H1 (cell line): ENCODE measurements at regions of chr17 and their contacts with region 1.

Region 1: GRCh38 chr17:75979705-75980187 is 706 bp downstream of the TEN1 start:
- DNase-seq: no peak
- H3K4me3 ChIP-seq: peak overlapping the region; percentile 72 to 88 (median 86)
- H3K27ac ChIP-seq: peak overlapping the region; percentile 93
- H3K4me1 ChIP-seq: peaks cover 6 to 15% (median 13%) of the 10 kb centered on the region in 4 experiments
- H3K27me3 ChIP-seq: no peaks in the 10 kb centered on the region
- CTCF ChIP-seq: no peak
- EP300 ChIP-seq: no peak
- POLR2A ChIP-seq: no peak; a peak in 1 of 3 replicates
- RAD21 ChIP-seq: no peak

Region 2: GRCh38 chr17:76005263-76006149 is 25.8 kb after region 1 on chr17:
- CTCF ChIA-PET with region 1: interaction called, 19 read pairs
- POLR2A ChIA-PET with region 1: interaction called, 6 read pairs
- DNase-seq: peak in 1 of 2 experiments; percentile 99
- H3K4me3 ChIP-seq: no peak overlapping the region
- H3K27ac ChIP-seq: no peak overlapping the region
- H3K4me1 ChIP-seq: no peaks in the 10 kb centered on the region
- H3K27me3 ChIP-seq: no peaks in the 10 kb centered on the region
- CTCF ChIP-seq: peak; percentile 56 to 92 (median 69)
- EP300 ChIP-seq: no peak
- POLR2A ChIP-seq: no peak
- RAD21 ChIP-seq: peak; percentile 83 to 90

Region 3: GRCh38 chr17:76095943-76096342 is 116.2 kb after region 1 on chr17:
- CTCF ChIA-PET with region 1: no interaction called
- POLR2A ChIA-PET with region 1: no interaction called
- DNase-seq: no peak
- H3K4me3 ChIP-seq: no peak overlapping the region
- H3K27ac ChIP-seq: no peak overlapping the region
- H3K4me1 ChIP-seq: no peaks in the 10 kb centered on the region
- H3K27me3 ChIP-seq: no peaks in the 10 kb centered on the region
- CTCF ChIP-seq: no peak
- EP300 ChIP-seq: no peak
- POLR2A ChIP-seq: no peak
- RAD21 ChIP-seq: no peak